Heart left ventricle (tissue), 16 donors: ENCODE measurements at regions of chr9 and their contacts with region 1.

Region 1: GRCh38 chr9:126514047-126514821 is 99.5 kb upstream of the LMX1B start:
- DNase-seq: peak; percentile 64 to 87 (median 76)
- ATAC-seq: peak in 3 of 4 donors; percentile 77 to 89 (median 86)
- H3K4me3 ChIP-seq: peak overlapping the region in 5 of 12 donors; percentile 1 to 31 (median 24)
- H3K27ac ChIP-seq: no peak overlapping the region
- H3K4me1 ChIP-seq: peaks cover 0 to 34% (median 12%) of the 10 kb centered on the region in 12 donors
- H3K27me3 ChIP-seq: peaks cover 22 to 82% (median 36%) of the 10 kb centered on the region in 9 donors
- CTCF ChIP-seq: peak; percentile 27 to 68 (median 52)
- POLR2A ChIP-seq: no peak

Region 2: DNA sequence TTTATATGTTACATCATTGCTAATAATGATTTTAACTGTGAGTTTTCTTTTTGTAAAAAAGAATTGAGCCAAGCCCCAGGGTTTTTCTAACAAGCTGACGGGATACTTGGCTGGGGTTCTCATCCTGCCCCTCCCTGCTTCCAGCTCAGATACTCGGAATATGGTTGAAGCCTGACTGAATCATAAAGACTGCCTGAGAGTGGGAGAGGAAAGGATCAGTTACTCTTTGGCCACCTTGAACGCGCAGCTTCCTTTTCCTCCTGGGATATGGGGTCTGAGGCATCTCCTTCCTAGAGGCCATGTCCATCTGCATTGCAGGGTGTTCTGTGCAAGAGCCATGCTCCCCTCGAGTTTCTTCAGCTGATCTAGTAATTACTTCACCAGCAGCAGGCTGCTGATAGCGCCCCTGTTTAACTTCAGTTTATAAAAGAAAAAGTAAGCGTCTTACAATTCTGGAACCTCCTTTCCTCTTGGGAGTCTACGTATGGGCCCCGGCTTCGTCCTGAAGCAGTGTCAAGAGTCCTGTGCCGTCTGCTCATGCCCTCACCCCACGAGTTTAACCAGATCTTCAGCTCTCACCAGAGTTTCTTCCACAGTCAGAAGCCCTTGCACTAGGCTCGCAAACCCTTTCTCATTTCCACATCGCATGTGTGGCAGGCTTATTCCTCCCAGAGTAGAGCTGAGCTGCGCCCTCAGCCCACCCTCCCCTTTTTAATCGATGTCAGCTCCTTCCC is 57.6 kb before region 1 on chr9:
- intact Hi-C with region 1: no loop called
- DNase-seq: peak in 1 of 5 donors; percentile 9
- ATAC-seq: peak in 3 of 4 donors; percentile 41 to 67 (median 62)
- H3K4me3 ChIP-seq: no peak overlapping the region
- H3K27ac ChIP-seq: peak overlapping the region in 1 of 12 donors; percentile 18
- H3K4me1 ChIP-seq: peaks cover 0 to 12% (median 2%) of the 10 kb centered on the region in 12 donors
- H3K27me3 ChIP-seq: no peaks in the 10 kb centered on the region
- CTCF ChIP-seq: no peak
- POLR2A ChIP-seq: no peak

Region 3: DNA sequence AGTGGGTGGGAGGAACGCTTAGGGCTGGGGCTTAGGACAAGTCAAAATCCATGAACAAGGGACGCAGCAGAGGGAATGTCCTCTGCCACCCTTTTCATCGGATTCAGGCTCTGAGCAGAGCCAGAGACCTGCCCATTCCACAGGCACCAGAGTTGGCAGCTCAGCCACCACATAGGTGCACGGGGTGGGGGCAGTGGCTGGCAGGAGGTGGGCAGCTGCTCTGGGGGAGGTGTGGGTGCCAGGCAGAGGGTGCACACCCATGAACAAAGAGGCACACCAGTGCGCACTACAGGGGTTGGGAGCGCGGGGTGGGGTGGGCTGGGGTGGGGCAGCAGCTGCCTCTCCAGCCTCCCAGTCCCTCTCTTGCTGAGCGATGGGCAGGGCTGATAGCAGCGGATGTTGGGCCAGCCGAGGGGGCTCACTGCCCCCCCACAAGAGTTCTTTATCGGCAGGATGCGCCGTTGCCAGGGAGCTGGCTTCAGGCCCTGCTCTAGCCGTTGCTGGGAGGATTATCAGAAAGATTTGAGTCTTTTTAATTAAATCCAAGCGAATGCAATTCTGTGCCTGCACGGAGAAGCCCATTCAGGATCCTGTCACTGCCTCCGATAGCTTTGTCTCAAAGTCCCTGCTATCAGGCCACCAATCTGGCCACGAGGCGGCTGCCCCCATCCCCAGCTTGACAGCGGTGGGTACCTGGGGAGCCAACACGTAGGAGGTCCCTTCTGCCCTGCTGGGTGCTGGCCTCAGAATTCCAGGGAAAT is 35.2 kb after region 1 on chr9:
- intact Hi-C with region 1: loop called in 2 of 10 experiments (anchors 5 kb)
- DNase-seq: no peak
- ATAC-seq: no peak
- H3K4me3 ChIP-seq: no peak overlapping the region
- H3K27ac ChIP-seq: no peak overlapping the region
- H3K4me1 ChIP-seq: peaks cover 0 to 10% (median 0%) of the 10 kb centered on the region in 12 donors
- H3K27me3 ChIP-seq: no peaks in the 10 kb centered on the region
- CTCF ChIP-seq: no peak
- POLR2A ChIP-seq: no peak

Region 4: GRCh38 chr9:126558051-126558665 is 43.9 kb after region 1 on chr9:
- intact Hi-C with region 1: loop called in 3 of 10 experiments (anchors 2 to 5 kb)
- DNase-seq: peak; percentile 46 to 76 (median 51)
- ATAC-seq: peak in 3 of 4 donors; percentile 75 to 78 (median 77)
- H3K4me3 ChIP-seq: no peak overlapping the region
- H3K27ac ChIP-seq: no peak overlapping the region
- H3K4me1 ChIP-seq: no peaks in the 10 kb centered on the region
- H3K27me3 ChIP-seq: peaks cover 0 to 16% (median 0%) of the 10 kb centered on the region in 9 donors
- CTCF ChIP-seq: peak; percentile 80 to 95 (median 88)
- POLR2A ChIP-seq: no peak

Region 5: GRCh38 chr9:126569036-126569435 is 54.8 kb after region 1 on chr9:
- intact Hi-C with region 1: no loop called
- DNase-seq: no peak
- ATAC-seq: no peak
- H3K4me3 ChIP-seq: no peak overlapping the region
- H3K27ac ChIP-seq: no peak overlapping the region
- H3K4me1 ChIP-seq: no peaks in the 10 kb centered on the region
- H3K27me3 ChIP-seq: peaks cover 0 to 27% (median 5%) of the 10 kb centered on the region in 9 donors
- CTCF ChIP-seq: no peak
- POLR2A ChIP-seq: no peak